GM10248 (cell line): ENCODE measurements at regions of chr3 and their contacts with region 1.

Region 1: GRCh38 chr3:150408221-150409102 is at the start of gene TSC22D2:
- DNase-seq: peak; percentile 90
- CTCF ChIP-seq: peak; percentile 19

Region 2: GRCh38 chr3:150396956-150397550 is 11.4 kb before region 1 on chr3:
- CTCF ChIA-PET with region 1: interaction called, 13 read pairs
- POLR2A ChIA-PET with region 1: interaction called, 3 read pairs
- DNase-seq: no peak
- CTCF ChIP-seq: no peak

Region 3: GRCh38 chr3:150428562-150428961 is 20.1 kb after region 1 on chr3:
- CTCF ChIA-PET with region 1: interaction called, 39 read pairs
- POLR2A ChIA-PET with region 1: interaction called, 8 read pairs
- DNase-seq: no peak
- CTCF ChIP-seq: no peak

Region 4: DNA sequence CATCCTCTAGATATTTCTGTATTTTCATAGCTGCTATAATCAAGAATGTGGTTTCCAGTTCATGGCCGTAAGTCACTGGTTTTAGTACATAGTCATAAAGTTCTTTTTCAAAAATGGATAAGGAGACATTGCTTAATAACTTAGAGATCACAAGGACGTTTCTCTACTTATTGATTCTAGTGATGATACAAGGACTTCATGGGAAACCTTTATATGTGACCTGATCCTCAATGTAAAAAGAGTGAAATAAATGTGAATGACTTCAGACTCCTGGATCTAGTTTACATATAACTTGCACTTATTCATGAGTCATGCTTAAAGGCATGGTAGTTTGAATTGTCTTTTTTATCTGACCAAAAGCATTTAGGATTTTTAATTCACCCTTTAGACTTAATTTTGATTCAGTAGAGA is 34.9 kb after region 1 on chr3:
- CTCF ChIA-PET with region 1: interaction called, 10 read pairs
- POLR2A ChIA-PET with region 1: no interaction called
- DNase-seq: no peak
- CTCF ChIP-seq: no peak